Right lobe of liver (tissue), 6 donors: ENCODE measurements at regions of chr17 and their contacts with region 1.

Region 1: DNA sequence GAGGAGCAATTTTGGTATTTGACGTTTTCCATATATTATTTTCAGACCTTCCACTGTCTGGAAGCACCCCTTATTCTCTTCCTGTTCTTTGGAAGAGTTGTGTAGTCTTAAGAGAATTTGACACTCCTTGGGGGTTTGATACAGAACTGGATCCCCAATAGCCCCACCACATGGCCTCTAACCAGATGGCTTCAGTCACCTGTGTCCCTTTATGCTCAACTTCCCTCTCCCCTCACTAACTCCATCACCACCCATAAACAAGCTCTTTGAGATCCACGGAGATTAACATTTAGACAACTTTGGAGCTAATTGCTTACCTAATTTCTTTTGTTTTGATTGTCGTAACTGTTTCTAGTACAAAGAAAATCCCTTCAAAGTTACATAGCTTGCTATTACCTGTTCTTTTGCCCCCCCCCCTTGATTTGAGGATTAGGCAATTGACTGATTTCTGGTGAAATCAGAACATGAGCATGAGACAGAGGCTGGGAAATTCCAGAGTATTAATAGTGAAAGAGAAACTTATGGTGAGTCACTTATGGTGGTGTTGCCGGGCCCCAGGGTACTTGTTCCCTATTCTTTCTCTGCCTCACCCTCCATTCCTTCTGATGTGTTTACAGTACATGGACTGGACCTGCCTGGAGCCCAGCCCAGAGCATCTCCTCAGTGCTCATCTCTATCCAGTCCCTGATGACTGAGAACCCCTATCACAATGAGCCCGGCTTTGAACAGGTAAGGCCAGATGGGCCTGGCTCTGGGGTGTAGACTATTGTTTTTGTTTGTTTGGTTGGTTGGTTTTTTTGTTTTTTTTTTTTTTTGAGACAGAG is 7.5 kb downstream of the UBE2Z start:
- DNase-seq: peak in 1 of 3 donors; percentile 42
- ATAC-seq: peak; percentile 54 to 98 (median 68)
- H3K4me3 ChIP-seq: no peak overlapping the region
- H3K27ac ChIP-seq: peak overlapping the region in 1 of 3 donors; percentile 29
- H3K4me1 ChIP-seq: peaks cover 0 to 4% (median 2%) of the 10 kb centered on the region in 4 donors
- H3K27me3 ChIP-seq: no peaks in the 10 kb centered on the region
- CTCF ChIP-seq: no peak
- POLR2A ChIP-seq: no peak

Region 2: DNA sequence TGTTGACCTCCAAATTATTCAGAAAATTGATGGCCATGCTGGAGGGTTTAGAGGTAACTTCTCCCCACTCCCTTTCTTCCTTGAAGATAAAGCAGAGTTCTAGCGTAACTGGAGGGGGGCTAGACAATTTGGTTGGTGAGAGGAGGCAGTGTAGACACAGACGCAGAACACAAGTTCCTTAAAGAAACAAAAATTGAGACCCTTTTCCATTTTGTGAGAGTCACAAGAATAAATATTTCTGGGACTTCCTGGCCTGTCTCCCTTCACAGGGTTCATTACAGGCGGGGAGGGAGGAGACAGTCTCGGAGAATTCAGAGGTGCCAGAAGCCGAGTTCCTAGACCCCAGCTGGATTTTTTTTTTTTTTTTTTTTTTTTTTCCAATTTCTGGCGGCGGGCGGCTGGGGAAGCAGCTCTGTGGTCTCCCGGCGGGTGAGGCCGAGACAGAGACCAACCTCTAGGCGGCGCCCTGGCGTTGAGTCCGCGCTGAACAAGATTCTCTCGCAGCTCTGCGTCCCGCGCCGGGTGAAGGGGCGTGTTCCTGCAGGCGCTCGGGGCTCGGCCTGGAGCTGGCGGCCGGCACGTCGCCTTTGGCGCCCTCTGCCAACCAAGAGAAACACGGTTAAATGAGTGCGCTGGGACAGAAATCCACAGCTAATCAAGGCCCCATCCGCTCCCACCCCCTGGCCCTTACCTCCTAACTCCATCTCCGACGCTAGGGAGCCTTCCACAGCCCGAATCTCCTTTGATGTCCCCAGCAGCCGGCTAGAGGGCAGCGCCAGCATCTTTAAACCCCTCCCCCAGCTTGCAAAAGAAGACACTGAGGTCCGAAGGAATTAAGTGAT is 279.3 kb before region 1 on chr17:
- intact Hi-C with region 1: no loop called
- DNase-seq: peak in 1 of 3 donors; percentile 66
- ATAC-seq: peak; percentile 54 to 78 (median 67)
- H3K4me3 ChIP-seq: no peak overlapping the region
- H3K27ac ChIP-seq: no peak overlapping the region
- H3K4me1 ChIP-seq: no peaks in the 10 kb centered on the region
- H3K27me3 ChIP-seq: peaks cover 12 to 68% of the 10 kb centered on the region in 2 donors
- CTCF ChIP-seq: peak; percentile 13 to 39 (median 38)
- POLR2A ChIP-seq: no peak

Region 3: GRCh38 chr17:48816774-48817590 is 98.7 kb before region 1 on chr17 and contains the start of gene TTLL6:
- intact Hi-C with region 1: no loop called
- DNase-seq: peak; percentile 77 to 84 (median 81)
- ATAC-seq: peak; percentile 94 to 98 (median 95)
- H3K4me3 ChIP-seq: peak within 1 kb of the TSS; percentile 35 to 48 (median 41)
- H3K27ac ChIP-seq: no peak within 1 kb of the TSS
- H3K4me1 ChIP-seq: peaks cover 0 to 5% (median 0%) of the 10 kb centered on the region in 4 donors
- H3K27me3 ChIP-seq: no peaks in the 10 kb centered on the region
- CTCF ChIP-seq: no peak
- POLR2A ChIP-seq: no peak
- total RNA-seq, gene TTLL6: 0.12 TPM in 1 of 6 experiments, not detected in the others

Region 4: DNA sequence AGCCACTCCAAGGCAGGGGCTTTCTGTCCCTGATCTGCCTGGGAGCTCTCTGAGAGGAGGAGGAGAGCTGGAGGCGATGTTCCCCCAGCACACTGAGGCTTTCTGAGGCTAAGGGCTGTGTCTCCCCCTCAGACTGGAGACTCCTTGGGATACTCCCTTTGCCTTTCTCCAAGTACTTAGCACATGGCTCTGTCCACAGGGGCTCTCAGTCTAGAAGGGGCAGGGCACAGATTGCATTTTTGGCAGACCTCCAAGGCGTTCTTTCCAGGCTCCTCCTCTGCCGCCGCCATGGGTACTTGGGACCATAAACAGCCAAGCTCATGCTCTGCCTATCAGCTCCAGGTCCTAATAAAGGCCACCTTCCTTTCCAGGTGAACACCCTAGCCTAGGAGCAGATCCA is 54.6 kb after region 1 on chr17:
- intact Hi-C with region 1: loop called in 1 of 2 experiments (anchors 10 kb)
- DNase-seq: no peak
- ATAC-seq: peak in 1 of 4 donors; percentile 18
- H3K4me3 ChIP-seq: no peak overlapping the region
- H3K27ac ChIP-seq: no peak overlapping the region
- H3K4me1 ChIP-seq: no peaks in the 10 kb centered on the region
- H3K27me3 ChIP-seq: no peaks in the 10 kb centered on the region
- CTCF ChIP-seq: no peak
- POLR2A ChIP-seq: no peak